ENCODE measurements at regions of chr1 and their contacts with region 1.

Region 1: DNA sequence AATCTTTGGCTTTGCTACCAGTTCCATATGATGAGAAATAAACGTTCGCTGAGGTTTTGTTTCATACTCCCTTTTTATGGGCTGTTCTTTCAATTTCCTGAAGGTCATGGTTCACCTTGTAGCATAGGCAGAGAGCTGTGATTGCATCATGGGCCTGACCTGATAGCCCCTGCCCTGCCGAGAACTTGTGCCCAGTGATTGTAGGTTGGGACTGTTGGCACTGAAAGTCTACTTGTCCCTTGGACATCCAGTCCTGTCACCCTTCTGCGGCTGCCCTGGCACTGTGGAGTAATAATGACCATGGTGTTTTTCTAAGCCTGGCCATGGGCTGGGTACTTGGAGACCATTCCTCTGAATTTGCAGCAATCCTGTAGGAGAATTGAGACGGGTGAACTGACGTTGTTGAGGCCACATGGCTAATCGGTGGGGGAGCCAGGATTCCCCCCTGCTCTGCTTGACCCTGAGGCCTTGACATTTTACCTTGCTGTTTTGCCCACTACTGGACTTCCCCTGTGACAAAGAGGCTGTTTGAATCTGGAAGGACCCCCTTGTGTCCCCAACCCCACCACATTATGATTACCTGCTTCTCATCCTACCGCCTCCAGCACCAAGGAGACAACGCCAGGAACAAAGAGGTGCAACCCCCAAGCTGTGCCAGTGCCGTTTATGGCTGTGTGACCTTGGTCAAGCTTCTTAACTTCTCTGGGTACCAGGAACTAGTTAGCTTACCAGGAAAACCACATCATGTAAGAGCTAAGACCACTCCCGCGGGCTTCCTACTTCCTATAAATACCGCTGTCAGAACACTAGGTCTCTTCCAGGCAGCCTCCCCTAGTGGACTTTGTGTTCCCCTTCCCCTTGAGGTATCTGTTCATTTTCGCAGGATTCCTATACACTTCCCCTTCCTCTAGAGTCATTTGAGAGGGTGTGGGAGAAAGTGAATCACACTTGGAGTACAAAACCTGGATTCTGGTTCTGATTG is 23.4 kb downstream of the SESN2 start:
- DNase-seq: no peak
- H3K4me3 Mint-ChIP-seq: no peak overlapping the region
- H3K27ac Mint-ChIP-seq: no peak overlapping the region
- H3K4me1 Mint-ChIP-seq: no peaks in the 10 kb centered on the region
- H3K27me3 Mint-ChIP-seq: no peaks in the 10 kb centered on the region
- CTCF ChIP-seq: no peak

Region 2: GRCh38 chr1:28123461-28123961 is 159.2 kb before region 1 on chr1:
- CTCF ChIA-PET with region 1: no interaction called
- POLR2A ChIA-PET with region 1: no interaction called
- intact Hi-C with region 1: no loop called
- DNase-seq: peak; percentile 85
- H3K4me3 Mint-ChIP-seq: peak overlapping the region; percentile 5
- H3K27ac Mint-ChIP-seq: no peak overlapping the region
- H3K4me1 Mint-ChIP-seq: peaks cover 8% of the 10 kb centered on the region
- H3K27me3 Mint-ChIP-seq: no peaks in the 10 kb centered on the region
- CTCF ChIP-seq: no peak

Region 3: DNA sequence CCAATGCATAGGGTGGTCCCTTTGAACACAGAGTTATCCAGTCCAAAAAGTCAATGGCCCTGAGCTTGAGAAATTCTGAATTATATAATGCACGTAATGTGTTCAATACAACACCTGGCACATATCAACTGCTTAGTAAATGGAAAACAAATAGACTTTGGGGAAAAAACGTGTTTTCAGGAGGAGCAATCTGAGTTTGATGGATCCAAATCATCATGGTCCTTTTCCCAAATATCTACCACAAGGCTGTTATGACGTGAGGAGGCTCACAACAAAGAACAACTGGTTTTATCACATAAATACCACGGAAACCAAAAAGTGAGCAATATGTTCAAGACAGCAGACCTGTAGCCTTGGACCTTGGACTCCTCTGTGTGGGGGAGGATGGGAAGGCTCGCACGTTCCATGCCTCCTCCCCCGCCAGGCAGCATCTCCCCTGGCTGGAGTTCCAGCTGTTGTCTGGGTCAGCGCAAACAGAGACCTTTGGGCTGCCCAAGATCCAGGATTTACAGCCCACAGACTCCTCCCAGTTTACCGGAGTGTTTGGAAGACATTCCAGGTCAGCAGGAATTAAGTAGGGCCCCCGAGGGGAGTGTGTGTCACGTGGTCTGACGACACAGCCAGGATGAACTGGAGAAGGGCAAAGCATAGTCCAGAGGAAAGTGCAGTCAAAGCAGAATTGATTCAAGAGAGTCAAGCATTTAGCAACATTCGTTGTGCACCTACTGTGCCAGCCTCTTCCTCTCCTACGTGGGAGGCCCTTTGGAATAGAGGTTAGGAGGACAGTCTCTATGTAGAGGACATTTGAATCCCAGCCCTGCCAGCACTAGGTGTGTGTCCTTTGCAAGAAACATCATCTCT is 13.9 kb after region 1 on chr1:
- CTCF ChIA-PET with region 1: no interaction called
- POLR2A ChIA-PET with region 1: interaction called, 13 read pairs
- intact Hi-C with region 1: no loop called
- DNase-seq: no peak
- H3K4me3 Mint-ChIP-seq: no peak overlapping the region
- H3K27ac Mint-ChIP-seq: no peak overlapping the region
- H3K4me1 Mint-ChIP-seq: no peaks in the 10 kb centered on the region
- H3K27me3 Mint-ChIP-seq: no peaks in the 10 kb centered on the region
- CTCF ChIP-seq: no peak

Region 4: GRCh38 chr1:28456078-28456477 is 173.4 kb after region 1 on chr1:
- CTCF ChIA-PET with region 1: no interaction called
- POLR2A ChIA-PET with region 1: no interaction called
- intact Hi-C with region 1: no loop called
- DNase-seq: peak; percentile 60
- H3K4me3 Mint-ChIP-seq: no peak overlapping the region
- H3K27ac Mint-ChIP-seq: peak overlapping the region; percentile 72
- H3K4me1 Mint-ChIP-seq: peaks cover 34% of the 10 kb centered on the region
- H3K27me3 Mint-ChIP-seq: no peaks in the 10 kb centered on the region
- CTCF ChIP-seq: no peak

Measured in MCF 10A (cell line).